H1 (cell line): ENCODE measurements at regions of chr12 and their contacts with region 1.

Region 1: DNA sequence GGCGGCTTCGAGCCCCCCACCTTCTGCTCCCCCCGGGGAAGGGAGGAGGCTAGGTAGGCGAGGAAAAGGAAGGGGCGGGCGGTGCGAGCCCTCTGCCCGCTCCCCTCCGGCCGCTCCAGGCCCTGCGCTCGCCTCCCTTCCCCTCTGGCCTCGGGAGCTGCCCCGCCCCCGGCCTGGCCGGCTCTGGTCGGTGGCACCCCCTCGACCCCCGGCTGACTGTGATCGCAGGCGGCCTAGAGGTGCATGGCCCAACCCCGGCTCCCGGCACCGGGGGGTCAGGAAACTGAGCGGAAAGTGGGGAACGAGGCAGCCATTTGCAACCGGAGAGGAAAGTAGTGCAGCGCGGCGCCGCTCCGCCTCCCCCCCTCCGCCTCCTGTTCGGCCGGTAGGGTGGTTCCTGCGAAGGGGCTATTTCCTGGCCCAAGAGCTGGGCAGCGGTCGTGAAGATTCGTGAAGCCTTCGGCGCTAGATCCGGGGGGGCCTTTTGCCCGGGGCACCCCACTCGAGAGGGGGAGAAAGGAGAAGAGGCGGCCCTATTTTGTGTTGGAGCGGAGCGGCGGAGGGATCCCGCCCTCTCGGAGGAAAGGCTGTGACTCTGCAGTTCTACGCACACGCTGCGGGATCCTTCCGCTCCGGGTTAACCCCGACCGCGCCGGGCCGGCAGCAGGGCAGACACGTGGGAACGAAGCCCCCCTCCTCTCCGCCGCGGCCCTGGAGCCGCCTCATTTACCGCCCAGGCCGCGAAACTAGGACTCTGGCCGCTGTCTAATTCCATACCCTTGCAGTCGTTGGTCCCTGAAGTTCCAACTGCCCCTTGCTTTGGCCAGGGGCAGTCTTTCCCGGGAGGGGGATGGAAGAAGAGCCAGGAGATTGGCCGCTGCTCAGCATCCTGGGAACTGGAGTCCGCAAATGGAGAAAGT is at the start of gene KMT2D:
- DNase-seq: peak; percentile 73 to 96
- H3K4me3 ChIP-seq: peak within 1 kb of the TSS; percentile 85 to 97 (median 96)
- H3K27ac ChIP-seq: peak within 1 kb of the TSS; percentile 97
- H3K4me1 ChIP-seq: peaks cover 9 to 36% (median 13%) of the 10 kb centered on the region in 4 experiments
- H3K27me3 ChIP-seq: no peaks in the 10 kb centered on the region
- CTCF ChIP-seq: no peak
- EP300 ChIP-seq: peak in 1 of 2 experiments; percentile 91; a peak in 1 of 3 replicates
- POLR2A ChIP-seq: peak; percentile 14 to 92
- RAD21 ChIP-seq: no peak
- total RNA-seq, gene KMT2D: 86.3 and 92.3 TPM in 2 replicates

Region 2: DNA sequence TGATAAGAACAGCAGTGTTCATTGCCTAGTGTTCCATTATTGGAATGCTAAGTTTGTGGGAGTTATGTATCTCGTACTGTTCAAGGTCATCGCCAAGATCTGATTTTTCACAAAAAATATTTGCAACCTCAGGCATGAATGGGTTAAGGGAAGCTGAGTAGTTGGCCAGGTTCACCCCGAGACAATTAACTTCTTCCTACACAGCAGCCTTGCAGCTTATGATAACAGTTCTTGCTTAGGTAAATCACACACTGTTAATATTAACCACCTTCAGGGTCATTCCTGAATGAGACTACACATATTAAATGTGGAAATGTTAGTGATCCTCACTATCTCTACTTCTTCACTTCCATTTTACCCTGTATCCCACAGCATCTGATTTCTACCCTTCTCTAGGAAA is 153.3 kb before region 1 on chr12:
- CTCF ChIA-PET with region 1: no interaction called
- POLR2A ChIA-PET with region 1: no interaction called
- DNase-seq: no peak
- H3K4me3 ChIP-seq: no peak overlapping the region
- H3K27ac ChIP-seq: no peak overlapping the region
- H3K4me1 ChIP-seq: 0 out of 7 replicates have a peak, but pooled peaks cover 0 to 2% (median 0%) of the 10 kb centered on the region in 4 experiments
- H3K27me3 ChIP-seq: no peaks in the 10 kb centered on the region
- CTCF ChIP-seq: no peak
- EP300 ChIP-seq: no peak
- POLR2A ChIP-seq: no peak
- RAD21 ChIP-seq: no peak

Region 3: GRCh38 chr12:49031553-49032162 is 28.8 kb before region 1 on chr12:
- CTCF ChIA-PET with region 1: no interaction called
- POLR2A ChIA-PET with region 1: interaction called, 47 read pairs
- DNase-seq: no peak
- H3K4me3 ChIP-seq: no peak overlapping the region
- H3K27ac ChIP-seq: no peak overlapping the region
- H3K4me1 ChIP-seq: no peaks in the 10 kb centered on the region
- H3K27me3 ChIP-seq: no peaks in the 10 kb centered on the region
- CTCF ChIP-seq: no peak
- EP300 ChIP-seq: no peak
- POLR2A ChIP-seq: no peak
- RAD21 ChIP-seq: no peak

Region 4: GRCh38 chr12:49079793-49080192 is 19.3 kb after region 1 on chr12:
- CTCF ChIA-PET with region 1: interaction called, 129 read pairs
- POLR2A ChIA-PET with region 1: interaction called, 7 read pairs
- DNase-seq: no peak
- H3K4me3 ChIP-seq: no peak overlapping the region
- H3K27ac ChIP-seq: no peak overlapping the region
- H3K4me1 ChIP-seq: no peaks in the 10 kb centered on the region
- H3K27me3 ChIP-seq: no peaks in the 10 kb centered on the region; a peak in 1 of 7 replicates
- CTCF ChIP-seq: no peak
- EP300 ChIP-seq: no peak
- POLR2A ChIP-seq: no peak
- RAD21 ChIP-seq: no peak

Region 5: GRCh38 chr12:49105608-49106007 is 45.1 kb after region 1 on chr12:
- CTCF ChIA-PET with region 1: interaction called, 99 read pairs
- POLR2A ChIA-PET with region 1: interaction called, 5 read pairs
- DNase-seq: no peak
- H3K4me3 ChIP-seq: no peak overlapping the region
- H3K27ac ChIP-seq: no peak overlapping the region
- H3K4me1 ChIP-seq: peaks cover 0 to 7% (median 2%) of the 10 kb centered on the region in 4 experiments; a peak in 4 of 7 replicates
- H3K27me3 ChIP-seq: no peaks in the 10 kb centered on the region
- CTCF ChIP-seq: no peak
- EP300 ChIP-seq: no peak
- POLR2A ChIP-seq: no peak
- RAD21 ChIP-seq: no peak

Region 6: GRCh38 chr12:49121047-49121696 is 60.7 kb after region 1 on chr12:
- CTCF ChIA-PET with region 1: interaction called, 28 read pairs
- POLR2A ChIA-PET with region 1: interaction called, 4 read pairs
- DNase-seq: peak; percentile 13 to 56
- H3K4me3 ChIP-seq: no peak overlapping the region
- H3K27ac ChIP-seq: no peak overlapping the region
- H3K4me1 ChIP-seq: no peaks in the 10 kb centered on the region
- H3K27me3 ChIP-seq: no peaks in the 10 kb centered on the region
- CTCF ChIP-seq: peak; percentile 48 to 82 (median 80)
- EP300 ChIP-seq: no peak
- POLR2A ChIP-seq: no peak
- RAD21 ChIP-seq: peak; percentile 75 to 80